ENCODE measurements at regions of chr16 and their contacts with region 1.

Region 1: GRCh38 chr16:4330277-4330874 is 14.5 kb downstream of the GLIS2 start:
- DNase-seq: peak; percentile 91
- H3K4me3 ChIP-seq: no peak overlapping the region
- H3K27ac ChIP-seq: peak overlapping the region in 3 of 4 donors; percentile 82 to 86 (median 83)
- H3K4me1 ChIP-seq: peaks cover 0 to 43% (median 41%) of the 10 kb centered on the region in 4 donors
- H3K27me3 ChIP-seq: no peaks in the 10 kb centered on the region
- CTCF ChIP-seq: peak; percentile 93 to 96 (median 94)
- EP300 ChIP-seq: no peak
- POLR2A ChIP-seq: no peak

Region 2: GRCh38 chr16:4200000-4200780 is 130.2 kb before region 1 on chr16:
- intact Hi-C with region 1: loop called (anchors 5 kb)
- DNase-seq: peak; percentile 85
- H3K4me3 ChIP-seq: no peak overlapping the region
- H3K27ac ChIP-seq: no peak overlapping the region
- H3K4me1 ChIP-seq: peaks cover 0 to 7% (median 2%) of the 10 kb centered on the region in 4 donors
- H3K27me3 ChIP-seq: no peaks in the 10 kb centered on the region
- CTCF ChIP-seq: peak; percentile 63 to 79 (median 69)
- EP300 ChIP-seq: no peak
- POLR2A ChIP-seq: no peak

Region 3: GRCh38 chr16:4271176-4272066 is 59.0 kb before region 1 on chr16:
- intact Hi-C with region 1: loop called (anchors 5 kb)
- DNase-seq: peak; percentile 94
- H3K4me3 ChIP-seq: peak overlapping the region; percentile 66 to 96 (median 88)
- H3K27ac ChIP-seq: peak overlapping the region; percentile 89 to 96 (median 94)
- H3K4me1 ChIP-seq: peaks cover 0 to 26% (median 15%) of the 10 kb centered on the region in 4 donors
- H3K27me3 ChIP-seq: no peaks in the 10 kb centered on the region
- CTCF ChIP-seq: no peak
- EP300 ChIP-seq: no peak
- POLR2A ChIP-seq: no peak

Region 4: GRCh38 chr16:4288148-4288921 is 42.0 kb before region 1 on chr16:
- intact Hi-C with region 1: loop called (anchors 1 kb)
- DNase-seq: peak; percentile 89
- H3K4me3 ChIP-seq: peak overlapping the region in 1 of 4 donors; percentile 12
- H3K27ac ChIP-seq: peak overlapping the region in 1 of 4 donors; percentile 15
- H3K4me1 ChIP-seq: peaks cover 0 to 35% (median 27%) of the 10 kb centered on the region in 4 donors
- H3K27me3 ChIP-seq: no peaks in the 10 kb centered on the region
- CTCF ChIP-seq: peak; percentile 87 to 98 (median 92)
- EP300 ChIP-seq: no peak
- POLR2A ChIP-seq: no peak

Region 5: DNA sequence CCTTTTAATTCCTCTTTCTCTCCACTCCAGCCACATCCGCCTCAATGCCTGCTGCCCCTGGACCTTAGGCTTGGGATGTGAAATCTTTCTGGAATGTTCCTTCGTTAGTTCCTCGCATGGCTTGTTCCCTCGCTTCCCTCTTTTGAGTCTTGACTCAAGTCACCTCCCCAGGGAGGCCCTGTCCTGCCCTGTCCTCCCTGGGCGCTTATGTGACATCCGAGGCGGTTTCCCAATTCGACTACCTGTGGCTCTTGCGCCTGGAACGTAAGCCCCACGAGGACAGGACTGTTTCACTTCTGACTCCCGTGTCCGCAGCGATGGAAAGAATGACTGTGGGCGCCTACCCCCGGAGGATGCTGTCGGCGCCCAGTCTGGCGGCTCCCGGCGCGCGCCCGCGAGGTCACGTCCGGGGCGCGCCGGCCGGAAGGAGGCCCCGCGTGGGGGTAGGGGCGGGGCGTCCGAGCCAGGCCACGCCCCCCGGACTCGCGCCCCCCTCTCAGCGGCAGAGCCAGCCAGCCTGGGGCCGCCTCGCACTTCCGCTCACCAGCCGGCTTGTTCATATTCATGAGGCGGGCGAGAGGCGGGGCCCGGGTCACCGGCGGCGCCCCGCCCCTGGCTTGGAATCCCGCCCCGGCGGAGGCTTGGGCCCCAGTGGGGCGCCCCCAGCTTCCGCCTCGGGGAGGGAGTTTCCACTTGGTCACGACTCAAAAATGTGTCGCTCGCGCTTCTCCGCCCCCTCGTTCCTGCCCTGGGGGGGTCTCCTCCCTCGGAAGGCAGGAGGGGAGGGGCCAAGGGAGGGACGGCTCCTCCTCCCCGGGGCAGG is 22.9 kb before region 1 on chr16:
- intact Hi-C with region 1: loop called (anchors 2 kb)
- DNase-seq: peak; percentile 97
- H3K4me3 ChIP-seq: peak overlapping the region; percentile 23 to 56 (median 48)
- H3K27ac ChIP-seq: peak overlapping the region; percentile 82 to 90 (median 86)
- H3K4me1 ChIP-seq: peaks cover 0 to 23% (median 23%) of the 10 kb centered on the region in 4 donors
- H3K27me3 ChIP-seq: no peaks in the 10 kb centered on the region
- CTCF ChIP-seq: no peak
- EP300 ChIP-seq: peak in 2 of 4 donors; percentile 45 to 47
- POLR2A ChIP-seq: no peak